Spleen (tissue), 13 donors: ENCODE measurements at regions of chr15 and their contacts with region 1.

Region 1: DNA sequence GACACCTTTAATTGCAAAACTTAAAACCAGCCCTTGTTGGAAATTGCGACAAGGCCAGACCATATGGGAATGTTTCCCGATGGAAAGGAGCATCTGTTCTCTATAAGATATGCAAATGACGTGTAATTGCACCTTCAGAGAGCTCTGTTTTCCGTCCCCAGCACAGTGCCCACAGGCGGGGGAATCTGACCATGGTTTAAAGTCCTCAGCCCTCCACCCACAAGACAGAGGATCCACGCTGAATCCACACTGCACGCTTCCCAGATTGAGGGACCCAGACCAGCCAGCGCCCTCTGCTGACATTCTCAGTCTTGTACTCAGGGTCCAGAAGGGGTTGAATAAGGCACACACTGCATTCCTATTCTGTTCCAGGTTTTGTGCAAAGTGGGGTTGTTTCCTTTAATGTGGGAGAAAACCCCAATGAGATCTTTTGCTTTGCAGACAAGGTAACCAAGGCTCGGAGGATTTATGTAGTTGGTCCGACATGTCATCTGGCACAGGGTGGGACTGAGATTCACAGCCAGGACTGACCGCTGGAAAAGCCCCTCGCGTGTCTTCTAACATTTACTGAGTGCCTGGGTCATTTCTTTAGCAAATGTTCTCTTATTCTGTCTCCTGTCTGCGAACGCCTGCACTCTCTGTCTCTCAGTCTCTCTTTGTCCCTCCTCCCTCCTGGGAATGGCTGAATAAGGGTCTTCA is 36.8 kb upstream of the KLHL25 start:
- DNase-seq: no peak
- H3K4me3 ChIP-seq: no peak overlapping the region
- H3K27ac ChIP-seq: no peak overlapping the region
- H3K4me1 ChIP-seq: no peaks in the 10 kb centered on the region
- H3K27me3 ChIP-seq: peaks cover 0 to 6% (median 0%) of the 10 kb centered on the region in 7 donors
- CTCF ChIP-seq: peak in 7 of 11 experiments; percentile 21 to 53 (median 35)
- POLR2A ChIP-seq: no peak

Region 2: DNA sequence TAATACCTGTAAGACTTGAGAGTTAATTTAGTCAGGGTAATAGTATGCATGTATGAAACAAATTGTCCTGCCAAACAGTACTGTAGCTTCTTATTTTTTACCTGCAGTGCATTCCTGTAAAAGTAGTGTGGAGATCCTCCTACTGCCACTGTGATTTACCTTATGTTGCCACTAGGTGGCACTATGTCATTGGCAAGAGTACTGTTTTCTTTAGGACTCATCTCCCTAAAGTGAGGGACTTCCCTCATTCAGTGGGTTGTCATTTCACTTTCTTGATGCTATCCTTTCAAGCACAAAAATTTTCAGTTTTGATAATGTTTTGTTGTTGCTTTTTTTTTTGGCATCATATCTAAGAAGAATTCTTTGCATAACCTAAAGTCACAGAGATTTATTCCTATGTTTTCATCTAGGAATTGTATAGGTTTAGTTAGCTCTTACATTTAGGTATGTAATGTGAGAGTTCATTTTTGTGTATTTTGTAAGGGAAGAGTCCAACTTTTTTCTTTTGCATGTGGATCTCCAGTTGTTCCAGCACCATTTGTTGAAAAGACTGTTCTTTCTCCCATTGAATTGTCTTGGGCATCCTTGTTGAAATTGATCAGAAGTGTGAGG is 345.5 kb before region 1 on chr15:
- intact Hi-C with region 1: loop called (anchors 10 kb)
- DNase-seq: no peak
- H3K4me3 ChIP-seq: no peak overlapping the region
- H3K27ac ChIP-seq: no peak overlapping the region
- H3K4me1 ChIP-seq: peaks cover 3 to 69% (median 53%) of the 10 kb centered on the region in 6 donors
- H3K27me3 ChIP-seq: no peaks in the 10 kb centered on the region
- CTCF ChIP-seq: peak; percentile 52 to 93 (median 83)
- POLR2A ChIP-seq: no peak